A549 (cell line): ENCODE measurements at regions of chr22 and their contacts with region 1.

Region 1: GRCh38 chr22:30289134-30289979 is at the start of gene CASTOR1:
- DNase-seq: peak; percentile 96
- ATAC-seq: peak; percentile 74 to 80
- H3K4me3 ChIP-seq: peak within 1 kb of the TSS; percentile 72
- H3K27ac ChIP-seq: peak within 1 kb of the TSS; percentile 76 to 92
- H3K4me1 ChIP-seq: peaks cover 40% of the 10 kb centered on the region
- CTCF ChIP-seq: no peak
- EP300 ChIP-seq: no peak
- POLR2A ChIP-seq: peak; percentile 36; the same call in 1 of the 2 replicates
- RAD21 ChIP-seq: no peak
- polyA plus RNA-seq, gene CASTOR1: 11.3 and 12.2 TPM in 2 replicates

Region 2: DNA sequence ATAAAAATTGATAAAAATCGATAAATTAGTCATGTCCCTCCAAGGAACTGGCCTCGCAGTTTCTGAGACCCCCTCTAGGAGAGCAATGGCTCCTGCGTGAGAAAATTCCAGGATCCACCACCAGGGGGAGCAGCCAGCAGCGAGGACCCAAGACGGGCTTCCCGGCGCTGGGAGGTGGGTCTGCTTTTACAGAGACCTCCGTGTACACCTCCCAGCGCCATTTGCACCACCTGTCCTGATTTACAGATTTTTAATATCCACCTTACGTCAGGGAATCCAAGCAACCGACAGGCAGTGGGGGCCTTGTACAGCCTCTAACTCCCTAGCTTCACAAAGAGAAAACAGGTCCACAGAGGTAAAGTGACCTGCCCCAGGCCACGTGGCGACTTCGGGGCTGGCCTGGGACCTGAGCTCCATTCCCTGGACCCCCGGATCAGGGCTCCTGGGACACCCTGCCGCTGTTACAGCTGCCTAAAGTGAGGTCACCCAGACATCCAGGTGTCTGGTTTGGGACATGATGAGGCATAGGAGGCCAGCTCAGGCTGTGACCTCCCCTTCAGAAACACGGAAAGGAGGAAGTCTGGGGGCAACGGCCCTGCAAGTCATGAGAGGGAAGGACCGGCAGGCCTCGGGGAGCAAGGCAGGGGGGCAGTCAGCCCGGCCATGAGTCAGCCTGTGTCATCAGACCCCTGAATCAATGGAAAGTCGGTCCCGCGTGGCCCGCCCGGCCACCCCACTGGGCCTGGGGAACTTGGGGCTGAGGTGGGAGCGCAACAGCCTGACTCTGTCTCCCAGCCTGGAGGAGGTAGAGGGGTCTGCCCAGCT is 26.2 kb before region 1 on chr22:
- CTCF ChIA-PET with region 1: interaction called, 19 read pairs
- POLR2A ChIA-PET with region 1: no interaction called
- DNase-seq: peak in 1 of 2 experiments; percentile 67
- ATAC-seq: peak; percentile 6 to 59; a peak in 3 of 6 replicates
- H3K4me3 ChIP-seq: no peak overlapping the region
- H3K27ac ChIP-seq: peak overlapping the region; percentile 99 to 100
- H3K4me1 ChIP-seq: peaks cover 55% of the 10 kb centered on the region
- CTCF ChIP-seq: peak; percentile 75
- EP300 ChIP-seq: no peak
- POLR2A ChIP-seq: no peak
- RAD21 ChIP-seq: peak; percentile 48 to 52; a peak in 4 of 5 replicates

Region 3: GRCh38 chr22:30277547-30278344 is 11.6 kb before region 1 on chr22:
- CTCF ChIA-PET with region 1: interaction called, 22 read pairs
- POLR2A ChIA-PET with region 1: no interaction called
- DNase-seq: no peak
- ATAC-seq: no peak
- H3K4me3 ChIP-seq: no peak overlapping the region
- H3K27ac ChIP-seq: peak overlapping the region in 1 of 2 experiments; percentile 70; a peak in 3 of 6 replicates
- H3K4me1 ChIP-seq: peaks cover 8% of the 10 kb centered on the region; the same call in 1 of the 3 replicates
- CTCF ChIP-seq: no peak
- EP300 ChIP-seq: no peak
- POLR2A ChIP-seq: no peak
- RAD21 ChIP-seq: no peak

Region 4: GRCh38 chr22:30309951-30310741 is 20.8 kb after region 1 on chr22:
- CTCF ChIA-PET with region 1: interaction called, 18 read pairs
- POLR2A ChIA-PET with region 1: no interaction called
- DNase-seq: no peak
- ATAC-seq: no peak
- H3K4me3 ChIP-seq: no peak overlapping the region
- H3K27ac ChIP-seq: no peak overlapping the region
- H3K4me1 ChIP-seq: peaks cover 47% of the 10 kb centered on the region
- CTCF ChIP-seq: no peak
- EP300 ChIP-seq: no peak
- POLR2A ChIP-seq: no peak
- RAD21 ChIP-seq: no peak

Region 5: GRCh38 chr22:30336752-30337460 is 47.5 kb after region 1 on chr22:
- CTCF ChIA-PET with region 1: interaction called, 13 read pairs
- POLR2A ChIA-PET with region 1: no interaction called
- DNase-seq: no peak
- ATAC-seq: no peak
- H3K4me3 ChIP-seq: no peak overlapping the region
- H3K27ac ChIP-seq: no peak overlapping the region
- H3K4me1 ChIP-seq: no peaks in the 10 kb centered on the region
- CTCF ChIP-seq: no peak
- EP300 ChIP-seq: no peak
- POLR2A ChIP-seq: no peak
- RAD21 ChIP-seq: no peak

Region 6: DNA sequence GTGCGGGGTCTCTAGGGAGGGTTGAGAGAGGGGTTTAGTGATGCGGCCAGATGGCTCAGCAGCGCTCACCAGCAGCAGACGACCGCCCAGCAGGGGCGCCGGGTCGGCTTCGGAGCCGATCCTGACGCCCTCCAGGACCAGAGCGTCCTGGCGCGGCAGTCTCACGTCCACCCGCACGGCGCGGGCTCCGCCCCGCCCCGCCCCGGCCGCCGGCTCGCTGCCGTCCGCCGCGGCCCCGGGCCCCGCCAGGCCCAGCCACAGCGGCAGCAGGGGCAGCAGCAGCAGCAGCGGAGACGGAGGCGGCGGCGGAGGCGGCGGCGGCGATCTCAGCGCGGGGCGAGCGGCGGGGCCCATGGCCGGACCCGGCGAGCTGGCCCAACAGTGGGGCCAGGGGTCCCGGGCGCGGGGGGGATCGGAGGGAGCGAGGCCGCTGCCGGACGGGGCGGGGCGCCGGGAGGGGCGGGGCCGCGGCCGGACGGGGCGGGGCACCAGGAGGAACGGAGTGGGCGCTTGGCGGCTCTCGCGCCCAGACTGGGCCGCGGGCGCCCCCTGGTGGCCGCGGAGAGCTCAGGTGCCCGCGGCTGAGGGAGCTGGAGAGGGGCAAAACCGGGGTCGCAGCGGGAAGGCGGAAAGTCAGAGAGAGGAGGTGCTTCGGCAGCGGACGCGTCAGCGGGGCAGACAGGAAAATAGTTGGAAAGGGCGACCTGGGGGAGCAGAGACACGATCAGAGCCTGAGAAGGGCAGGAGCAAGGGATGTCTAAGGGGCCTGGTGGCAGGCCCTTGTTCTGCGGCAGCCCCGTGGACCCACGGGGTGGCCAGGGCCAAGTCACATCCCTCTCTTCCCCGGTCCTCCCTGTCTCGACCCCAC is 97.8 kb after region 1 on chr22 and contains the start of gene RNF215:
- CTCF ChIA-PET with region 1: interaction called, 37 read pairs
- POLR2A ChIA-PET with region 1: interaction called, 3 read pairs
- DNase-seq: peak; percentile 63 to 68
- ATAC-seq: peak; percentile 88 to 90
- H3K4me3 ChIP-seq: peak within 1 kb of the TSS; percentile 70
- H3K27ac ChIP-seq: peak within 1 kb of the TSS; percentile 96 to 100
- H3K4me1 ChIP-seq: no peaks in the 10 kb centered on the region; the same call in 2 of the 3 replicates
- CTCF ChIP-seq: peak; percentile 83
- EP300 ChIP-seq: no peak
- POLR2A ChIP-seq: 0 out of 2 replicates have a peak, but pooled peaks have one; percentile 23
- RAD21 ChIP-seq: peak; percentile 63 to 84
- polyA plus RNA-seq, gene RNF215: 16.4 and 19.0 TPM in 2 replicates

Region 7: DNA sequence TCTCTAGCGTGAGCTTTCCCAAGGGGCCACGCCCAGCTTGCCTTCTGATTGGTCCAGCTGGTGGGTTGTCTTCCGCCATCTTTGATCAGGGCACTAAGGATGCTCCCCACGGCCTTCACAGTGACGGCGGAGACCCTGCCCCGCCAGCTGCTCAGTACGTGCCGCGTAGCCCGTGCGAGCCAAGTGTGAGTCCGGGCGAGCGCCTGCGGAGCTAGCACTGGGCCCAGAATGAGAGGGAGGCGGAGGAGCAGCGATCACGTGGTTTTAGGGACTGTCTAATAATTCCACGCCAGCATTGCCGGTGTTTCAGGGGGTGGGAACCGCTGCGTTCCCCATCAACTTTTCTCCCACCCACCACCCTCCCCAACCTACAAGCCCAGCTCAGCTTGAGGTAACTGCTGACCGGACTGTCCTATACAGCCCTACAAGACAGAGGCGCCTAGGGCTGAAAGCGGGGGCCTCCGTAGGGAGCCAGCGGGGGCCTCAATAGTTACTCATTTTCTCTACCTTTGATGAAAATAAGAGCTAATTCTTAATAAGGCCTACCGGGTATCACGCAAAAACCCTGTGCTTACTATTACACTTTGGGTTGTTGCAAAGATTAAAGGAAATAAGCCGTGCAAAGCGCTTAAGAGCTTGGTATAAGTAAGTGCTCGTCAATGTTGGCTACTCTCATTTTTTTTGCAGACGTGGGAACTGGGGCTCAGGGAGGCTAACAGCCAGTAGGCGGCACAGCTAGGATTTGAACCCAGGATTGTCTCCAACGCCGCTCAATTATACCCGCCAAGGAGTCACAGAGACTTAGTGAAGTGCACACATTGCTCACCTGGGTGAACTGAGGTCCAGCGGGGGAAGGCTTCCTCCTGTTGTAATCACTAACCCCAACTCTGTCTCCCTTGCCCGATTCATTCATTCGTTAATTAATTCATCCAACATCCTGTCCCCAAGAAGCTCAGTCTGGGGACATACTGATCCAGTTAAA is 134.9 kb after region 1 on chr22:
- CTCF ChIA-PET with region 1: interaction called, 17 read pairs
- POLR2A ChIA-PET with region 1: interaction called, 6 read pairs
- DNase-seq: peak; percentile 95 to 99
- ATAC-seq: peak; percentile 79 to 86
- H3K4me3 ChIP-seq: peak overlapping the region; percentile 68
- H3K27ac ChIP-seq: peak overlapping the region; percentile 97
- H3K4me1 ChIP-seq: peaks cover 43% of the 10 kb centered on the region
- CTCF ChIP-seq: no peak
- EP300 ChIP-seq: no peak
- POLR2A ChIP-seq: peak; percentile 37; the same call in 1 of the 2 replicates
- RAD21 ChIP-seq: no peak